ENCODE measurements at regions of chr1 and their contacts with region 1.

Region 1: GRCh38 chr1:116498789-116499628 is 71.8 kb downstream of the CD58 start:
- DNase-seq: peak in 12 of 14 experiments; percentile 22 to 77 (median 31)
- ATAC-seq: peak; percentile 76
- H3K4me3 ChIP-seq: no peak overlapping the region
- H3K4me3 Mint-ChIP-seq: no peak overlapping the region
- H3K27ac ChIP-seq: no peak overlapping the region
- H3K27ac Mint-ChIP-seq: no peak overlapping the region
- H3K4me1 ChIP-seq: peaks cover 33% of the 10 kb centered on the region
- H3K4me1 Mint-ChIP-seq: peaks cover 27% of the 10 kb centered on the region
- H3K27me3 ChIP-seq: no peaks in the 10 kb centered on the region
- H3K27me3 Mint-ChIP-seq: no peaks in the 10 kb centered on the region
- CTCF ChIP-seq: peak; percentile 77

Region 2: DNA sequence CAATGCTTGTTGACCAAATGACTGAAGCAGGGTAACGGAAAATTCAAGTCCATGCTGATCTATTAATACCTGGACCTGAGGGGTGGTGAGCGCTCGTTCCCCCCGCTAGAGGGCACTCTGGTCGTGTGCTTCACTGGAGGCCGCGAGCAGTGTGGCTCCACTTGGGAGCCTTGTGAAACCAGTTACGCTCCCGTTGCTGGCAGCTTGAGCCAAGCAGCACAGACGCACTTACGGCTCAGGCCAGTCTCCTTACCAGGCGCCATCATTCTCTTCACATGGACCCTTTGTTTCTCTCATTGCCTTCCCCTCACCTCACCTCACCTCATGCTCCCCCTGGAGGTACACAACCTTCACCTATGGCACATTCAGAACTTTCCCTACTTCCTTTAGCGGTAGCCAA is 1360.0 kb before region 1 on chr1:
- CTCF ChIA-PET with region 1: no interaction called
- POLR2A ChIA-PET with region 1: no interaction called
- intact Hi-C with region 1: loop called in 1 of 2 experiments (anchors 5 kb)
- DNase-seq: peak; percentile 33 to 80 (median 45)
- ATAC-seq: peak; percentile 81
- H3K4me3 ChIP-seq: peak overlapping the region; percentile 13
- H3K4me3 Mint-ChIP-seq: peak overlapping the region; percentile 39
- H3K27ac ChIP-seq: no peak overlapping the region
- H3K27ac Mint-ChIP-seq: no peak overlapping the region
- H3K4me1 ChIP-seq: peaks cover 6% of the 10 kb centered on the region
- H3K4me1 Mint-ChIP-seq: no peaks in the 10 kb centered on the region
- H3K27me3 ChIP-seq: peaks cover 6 to 7% of the 10 kb centered on the region in 2 experiments
- H3K27me3 Mint-ChIP-seq: peaks cover 38% of the 10 kb centered on the region
- CTCF ChIP-seq: peak; percentile 76

Region 3: DNA sequence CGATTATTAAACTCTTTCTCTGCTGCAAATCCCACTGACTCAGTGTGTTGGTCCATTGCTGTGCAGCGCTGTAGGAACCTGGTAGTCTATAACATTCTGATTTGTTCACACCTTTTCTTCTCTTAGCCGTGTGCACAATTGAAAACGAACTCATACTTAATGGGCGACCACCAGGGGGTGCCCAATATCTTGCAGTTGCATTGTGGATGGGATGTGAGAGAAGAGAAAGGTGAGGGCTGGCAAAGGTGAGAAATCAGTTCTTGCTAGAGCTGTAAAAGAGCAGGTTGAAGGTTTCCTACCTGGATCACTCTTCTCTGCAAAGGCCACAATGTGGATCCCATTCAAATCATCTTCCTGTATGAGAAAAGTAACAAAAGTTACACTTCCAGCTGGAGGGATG is 781.5 kb before region 1 on chr1:
- CTCF ChIA-PET with region 1: no interaction called
- POLR2A ChIA-PET with region 1: no interaction called
- intact Hi-C with region 1: loop called (anchors 5 kb)
- DNase-seq: peak in 5 of 14 experiments; percentile 9 to 42 (median 31)
- ATAC-seq: no peak
- H3K4me3 ChIP-seq: no peak overlapping the region
- H3K4me3 Mint-ChIP-seq: no peak overlapping the region
- H3K27ac ChIP-seq: no peak overlapping the region
- H3K27ac Mint-ChIP-seq: no peak overlapping the region
- H3K4me1 ChIP-seq: no peaks in the 10 kb centered on the region
- H3K4me1 Mint-ChIP-seq: no peaks in the 10 kb centered on the region
- H3K27me3 ChIP-seq: no peaks in the 10 kb centered on the region
- H3K27me3 Mint-ChIP-seq: peaks cover 4% of the 10 kb centered on the region
- CTCF ChIP-seq: peak; percentile 31

Region 4: GRCh38 chr1:115807723-115808122 is 691.3 kb before region 1 on chr1:
- CTCF ChIA-PET with region 1: no interaction called
- POLR2A ChIA-PET with region 1: no interaction called
- intact Hi-C with region 1: loop called (anchors 2 kb)
- DNase-seq: peak in 7 of 14 experiments; percentile 3 to 69 (median 28)
- ATAC-seq: peak; percentile 41
- H3K4me3 ChIP-seq: no peak overlapping the region
- H3K4me3 Mint-ChIP-seq: no peak overlapping the region
- H3K27ac ChIP-seq: no peak overlapping the region
- H3K27ac Mint-ChIP-seq: no peak overlapping the region
- H3K4me1 ChIP-seq: no peaks in the 10 kb centered on the region
- H3K4me1 Mint-ChIP-seq: no peaks in the 10 kb centered on the region
- H3K27me3 ChIP-seq: peaks cover 0 to 15% of the 10 kb centered on the region in 2 experiments
- H3K27me3 Mint-ChIP-seq: peaks cover 28% of the 10 kb centered on the region
- CTCF ChIP-seq: peak; percentile 46

Region 5: GRCh38 chr1:116485071-116485735 is 13.8 kb before region 1 on chr1:
- CTCF ChIA-PET with region 1: interaction called, 31 read pairs
- POLR2A ChIA-PET with region 1: no interaction called
- intact Hi-C with region 1: no loop called
- DNase-seq: peak; percentile 79 to 95 (median 86)
- ATAC-seq: peak; percentile 90
- H3K4me3 ChIP-seq: no peak overlapping the region
- H3K4me3 Mint-ChIP-seq: no peak overlapping the region
- H3K27ac ChIP-seq: no peak overlapping the region
- H3K27ac Mint-ChIP-seq: no peak overlapping the region
- H3K4me1 ChIP-seq: peaks cover 4% of the 10 kb centered on the region
- H3K4me1 Mint-ChIP-seq: no peaks in the 10 kb centered on the region
- H3K27me3 ChIP-seq: no peaks in the 10 kb centered on the region
- H3K27me3 Mint-ChIP-seq: no peaks in the 10 kb centered on the region
- CTCF ChIP-seq: peak; percentile 99

Region 6: DNA sequence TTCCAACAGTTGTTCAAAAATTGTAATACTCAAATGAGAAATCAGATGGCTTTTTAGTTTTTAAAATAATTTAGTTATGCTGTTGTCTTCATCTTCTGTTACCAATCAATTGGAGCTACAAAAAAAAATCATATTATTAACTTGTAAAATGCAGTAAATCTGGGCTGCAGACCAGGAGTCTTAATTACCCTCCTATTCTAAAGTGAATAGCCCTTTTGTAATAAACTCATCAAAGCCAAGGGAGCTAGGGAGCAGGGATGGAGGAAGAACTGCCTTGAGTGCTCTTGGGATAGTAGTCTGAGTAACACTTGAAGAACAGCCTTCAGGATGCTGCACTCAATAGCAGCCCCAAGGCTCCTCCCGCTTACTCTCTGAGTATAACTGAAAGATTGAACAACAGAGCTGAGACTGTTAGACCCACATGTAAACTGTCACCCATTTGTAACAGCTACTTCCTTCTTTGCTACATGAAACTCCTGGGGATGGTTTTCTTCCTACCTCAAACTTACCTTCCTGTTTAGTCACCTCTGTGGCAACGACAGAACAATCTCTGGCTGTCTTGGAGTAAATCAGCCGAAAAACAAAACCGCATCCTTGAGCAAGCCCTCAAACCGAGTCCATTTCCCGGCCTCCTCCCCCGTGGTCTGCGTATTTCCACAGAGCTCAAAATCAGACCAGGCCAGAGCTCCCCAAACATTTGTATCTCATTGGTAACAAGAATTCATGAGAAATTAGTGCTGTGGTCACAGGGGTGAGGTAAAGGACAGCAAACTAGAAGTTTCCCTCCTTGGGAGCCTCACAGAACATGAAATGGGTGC is 15.9 kb after region 1 on chr1:
- CTCF ChIA-PET with region 1: interaction called, 15 read pairs
- POLR2A ChIA-PET with region 1: interaction called, 26 read pairs
- intact Hi-C with region 1: loop called in 1 of 2 experiments (anchors 1 kb)
- DNase-seq: peak in 13 of 14 experiments; percentile 23 to 90 (median 52)
- ATAC-seq: peak; percentile 79
- H3K4me3 ChIP-seq: peak overlapping the region; percentile 1
- H3K4me3 Mint-ChIP-seq: peak overlapping the region; percentile 57
- H3K27ac ChIP-seq: peak overlapping the region; percentile 46 to 80
- H3K27ac Mint-ChIP-seq: peak overlapping the region; percentile 90
- H3K4me1 ChIP-seq: peaks cover 59% of the 10 kb centered on the region
- H3K4me1 Mint-ChIP-seq: peaks cover 65% of the 10 kb centered on the region
- H3K27me3 ChIP-seq: no peaks in the 10 kb centered on the region
- H3K27me3 Mint-ChIP-seq: no peaks in the 10 kb centered on the region
- CTCF ChIP-seq: no peak